ENCODE measurements at regions of chr19 and their contacts with region 1.

Region 1: GRCh38 chr19:41376241-41376997 is at the start of gene TMEM91:
- DNase-seq: no peak
- H3K4me3 ChIP-seq: peak within 1 kb of the TSS; percentile 50
- H3K27me3 ChIP-seq: no peaks in the 10 kb centered on the region
- CTCF ChIP-seq: no peak
- polyA plus RNA-seq, gene TMEM91: 3.2 and 5.1 TPM in 2 replicates

Region 2: DNA sequence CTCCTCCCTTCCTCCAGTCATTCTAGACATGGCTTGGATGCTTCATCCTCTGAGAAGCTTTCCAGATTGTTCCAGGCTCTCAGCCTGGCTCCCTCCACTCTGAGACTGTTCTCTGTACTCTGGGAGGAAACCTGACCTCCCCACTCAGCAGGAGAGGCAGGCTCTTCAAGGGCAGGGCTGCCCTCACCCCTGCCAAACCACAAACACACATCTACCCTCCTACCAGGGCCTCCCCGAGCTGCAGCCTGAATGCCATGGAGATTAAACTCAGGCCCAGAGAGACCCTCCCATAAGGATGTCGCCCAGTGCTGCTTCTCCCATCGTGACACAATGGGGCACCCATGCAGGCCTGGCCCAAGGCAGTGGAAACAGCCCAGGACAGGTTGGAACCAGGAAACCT is 702.1 kb before region 1 on chr19:
- CTCF ChIA-PET with region 1: no interaction called
- POLR2A ChIA-PET with region 1: interaction called, 11 read pairs
- DNase-seq: no peak
- H3K4me3 ChIP-seq: no peak overlapping the region
- H3K27me3 ChIP-seq: no peaks in the 10 kb centered on the region
- CTCF ChIP-seq: no peak

Region 3: DNA sequence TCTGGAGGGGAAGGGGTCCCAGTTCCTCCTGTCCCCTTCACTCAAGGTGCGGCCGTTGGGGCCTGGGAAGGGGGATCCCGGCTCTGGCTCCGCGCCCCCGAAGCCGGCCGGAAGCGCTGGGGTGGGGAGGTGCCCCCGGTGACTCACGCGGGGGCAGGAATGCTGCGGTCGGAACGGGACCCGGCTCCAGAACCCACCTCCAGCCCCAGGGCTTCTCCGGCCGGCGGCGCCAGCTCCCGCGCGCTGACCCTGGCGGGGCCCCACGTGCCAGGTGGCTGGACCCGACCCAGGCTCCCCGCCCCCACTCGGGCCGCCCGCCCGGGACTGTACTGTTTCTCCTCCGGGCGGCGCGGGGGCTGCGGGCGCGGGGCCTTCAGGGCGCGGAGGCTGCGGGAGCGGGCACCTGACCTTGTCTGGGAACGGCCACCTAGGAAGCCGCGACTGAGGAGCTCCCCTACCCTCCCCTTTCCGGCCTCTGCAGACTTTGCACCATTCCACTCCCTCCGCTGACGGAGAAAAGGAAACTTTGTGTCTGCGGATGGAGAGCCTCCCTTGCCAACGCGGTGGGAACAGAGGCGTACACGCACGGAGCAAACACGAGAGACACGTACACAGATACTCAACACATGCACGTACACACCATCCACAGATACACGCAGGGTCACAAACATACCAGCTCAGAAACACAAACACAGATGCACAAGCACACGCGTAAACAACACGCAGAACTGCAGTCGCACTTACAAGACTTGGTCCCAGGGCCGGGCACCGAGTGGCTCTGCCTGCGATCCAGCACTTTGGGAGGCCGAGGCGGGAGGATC is 150.2 kb before region 1 on chr19:
- CTCF ChIA-PET with region 1: no interaction called
- POLR2A ChIA-PET with region 1: no interaction called
- DNase-seq: peak; percentile 26
- H3K4me3 ChIP-seq: peak overlapping the region; percentile 31
- H3K27me3 ChIP-seq: no peaks in the 10 kb centered on the region
- CTCF ChIP-seq: no peak

Region 4: GRCh38 chr19:41409288-41409687 is 32.9 kb after region 1 on chr19:
- CTCF ChIA-PET with region 1: no interaction called
- POLR2A ChIA-PET with region 1: no interaction called
- DNase-seq: no peak
- H3K4me3 ChIP-seq: no peak overlapping the region
- H3K27me3 ChIP-seq: no peaks in the 10 kb centered on the region
- CTCF ChIP-seq: no peak

Measured in BJ (cell line).